MCF 10A (cell line): ENCODE measurements at regions of chr13 and their contacts with region 1.

Region 1: GRCh38 chr13:68927387-68928026 is 1180.1 kb upstream of the ATXN8OS start:
- DNase-seq: peak; percentile 62
- H3K4me3 Mint-ChIP-seq: no peak overlapping the region
- H3K27ac Mint-ChIP-seq: no peak overlapping the region
- H3K4me1 Mint-ChIP-seq: no peaks in the 10 kb centered on the region
- H3K27me3 Mint-ChIP-seq: no peaks in the 10 kb centered on the region
- CTCF ChIP-seq: peak; percentile 82

Region 2: DNA sequence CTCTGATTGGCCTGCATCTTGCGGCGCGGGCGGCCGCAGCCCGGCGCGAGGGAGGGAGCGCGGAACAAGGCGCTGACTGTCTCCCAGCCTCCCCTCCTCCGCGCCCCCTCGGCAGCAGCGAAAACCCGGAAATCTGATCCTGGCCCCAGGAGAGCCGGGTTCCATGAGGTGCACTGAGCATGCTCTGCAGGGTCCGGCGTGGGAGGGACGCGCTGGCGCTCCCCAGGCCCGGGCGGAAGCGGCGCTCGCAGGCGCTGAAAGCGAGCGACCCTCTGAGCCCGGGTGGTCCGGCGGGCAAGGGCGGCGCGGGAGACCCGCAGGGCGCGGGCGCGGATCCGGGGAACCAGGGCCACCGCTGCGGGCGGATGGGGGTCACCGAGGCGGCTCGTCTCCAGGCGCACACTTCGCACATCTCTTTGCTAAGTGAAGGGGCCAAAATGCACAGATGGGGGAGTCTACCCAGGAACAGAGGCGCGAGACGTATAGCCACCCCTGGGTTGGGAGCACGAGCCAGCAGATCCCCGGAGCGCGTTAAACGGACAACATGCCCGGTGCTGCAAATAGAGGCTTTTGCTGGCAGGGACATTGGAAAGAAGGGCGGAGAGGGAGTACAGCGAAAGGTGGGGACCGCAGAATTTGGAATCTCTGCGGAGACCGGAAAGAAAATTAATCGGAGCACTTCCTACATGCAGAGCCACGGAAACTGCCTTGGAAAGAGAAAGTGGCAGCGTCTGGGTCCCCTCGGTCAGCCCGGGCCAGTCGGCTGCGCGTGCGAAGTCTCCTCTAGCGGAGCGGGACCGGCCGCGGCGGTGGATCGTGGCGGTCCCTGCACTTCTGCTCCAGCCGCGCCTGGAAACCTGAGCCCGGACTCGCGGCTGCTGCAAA is 1696.9 kb before region 1 on chr13:
- CTCF ChIA-PET with region 1: no interaction called
- POLR2A ChIA-PET with region 1: no interaction called
- intact Hi-C with region 1: loop called (anchors 2 kb)
- DNase-seq: peak; percentile 96
- H3K4me3 Mint-ChIP-seq: no peak overlapping the region
- H3K27ac Mint-ChIP-seq: no peak overlapping the region
- H3K4me1 Mint-ChIP-seq: peaks cover 14% of the 10 kb centered on the region
- H3K27me3 Mint-ChIP-seq: no peaks in the 10 kb centered on the region
- CTCF ChIP-seq: no peak

Region 3: GRCh38 chr13:67736646-67737420 is 1190.7 kb before region 1 on chr13:
- CTCF ChIA-PET with region 1: no interaction called
- POLR2A ChIA-PET with region 1: no interaction called
- intact Hi-C with region 1: loop called (anchors 10 kb)
- DNase-seq: peak; percentile 68
- H3K4me3 Mint-ChIP-seq: no peak overlapping the region
- H3K27ac Mint-ChIP-seq: peak overlapping the region; percentile 47
- H3K4me1 Mint-ChIP-seq: peaks cover 14% of the 10 kb centered on the region
- H3K27me3 Mint-ChIP-seq: no peaks in the 10 kb centered on the region
- CTCF ChIP-seq: peak; percentile 20

Region 4: DNA sequence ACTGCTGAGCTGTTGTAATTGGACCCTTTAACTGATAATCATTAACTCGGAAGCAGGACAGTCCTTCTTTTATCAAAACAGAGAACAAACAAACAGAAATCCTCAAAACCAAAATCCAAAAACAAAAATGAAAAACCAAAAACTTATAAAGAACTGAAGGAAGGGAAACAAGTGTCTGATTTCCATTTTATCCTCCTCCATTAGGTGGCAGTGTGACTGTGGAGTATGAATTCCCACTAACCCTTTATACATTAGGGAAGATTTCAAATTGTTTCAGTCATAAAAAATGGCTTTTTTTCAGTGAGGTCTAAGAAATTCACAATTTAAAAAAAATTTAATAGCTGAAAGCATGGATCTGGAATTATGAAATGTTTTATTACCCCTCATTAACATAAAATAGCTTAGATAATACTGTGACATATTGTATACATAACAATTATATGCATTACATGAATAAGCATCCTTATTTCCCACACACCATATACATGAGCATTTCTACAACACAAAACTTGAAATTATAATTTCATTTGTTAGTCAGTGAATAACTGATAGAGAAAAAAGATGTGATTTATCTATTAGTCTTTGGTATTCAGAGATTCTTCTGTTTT is 623.1 kb before region 1 on chr13:
- CTCF ChIA-PET with region 1: interaction called, 22 read pairs
- POLR2A ChIA-PET with region 1: interaction called, 3 read pairs
- intact Hi-C with region 1: loop called (anchors 1 kb)
- DNase-seq: peak; percentile 62
- H3K4me3 Mint-ChIP-seq: no peak overlapping the region
- H3K27ac Mint-ChIP-seq: no peak overlapping the region
- H3K4me1 Mint-ChIP-seq: no peaks in the 10 kb centered on the region
- H3K27me3 Mint-ChIP-seq: no peaks in the 10 kb centered on the region
- CTCF ChIP-seq: peak; percentile 60

Region 5: GRCh38 chr13:68897331-68897928 is 30.1 kb before region 1 on chr13:
- CTCF ChIA-PET with region 1: no interaction called
- POLR2A ChIA-PET with region 1: no interaction called
- intact Hi-C with region 1: no loop called
- DNase-seq: no peak
- H3K4me3 Mint-ChIP-seq: no peak overlapping the region
- H3K27ac Mint-ChIP-seq: no peak overlapping the region
- H3K4me1 Mint-ChIP-seq: no peaks in the 10 kb centered on the region
- H3K27me3 Mint-ChIP-seq: no peaks in the 10 kb centered on the region
- CTCF ChIP-seq: no peak

Region 6: GRCh38 chr13:68948586-68948985 is 21.1 kb after region 1 on chr13:
- CTCF ChIA-PET with region 1: no interaction called
- POLR2A ChIA-PET with region 1: no interaction called
- intact Hi-C with region 1: no loop called
- DNase-seq: no peak
- H3K4me3 Mint-ChIP-seq: no peak overlapping the region
- H3K27ac Mint-ChIP-seq: no peak overlapping the region
- H3K4me1 Mint-ChIP-seq: no peaks in the 10 kb centered on the region
- H3K27me3 Mint-ChIP-seq: no peaks in the 10 kb centered on the region
- CTCF ChIP-seq: no peak